ENCODE measurements at regions of chr12 and their contacts with region 1.

Region 1: DNA sequence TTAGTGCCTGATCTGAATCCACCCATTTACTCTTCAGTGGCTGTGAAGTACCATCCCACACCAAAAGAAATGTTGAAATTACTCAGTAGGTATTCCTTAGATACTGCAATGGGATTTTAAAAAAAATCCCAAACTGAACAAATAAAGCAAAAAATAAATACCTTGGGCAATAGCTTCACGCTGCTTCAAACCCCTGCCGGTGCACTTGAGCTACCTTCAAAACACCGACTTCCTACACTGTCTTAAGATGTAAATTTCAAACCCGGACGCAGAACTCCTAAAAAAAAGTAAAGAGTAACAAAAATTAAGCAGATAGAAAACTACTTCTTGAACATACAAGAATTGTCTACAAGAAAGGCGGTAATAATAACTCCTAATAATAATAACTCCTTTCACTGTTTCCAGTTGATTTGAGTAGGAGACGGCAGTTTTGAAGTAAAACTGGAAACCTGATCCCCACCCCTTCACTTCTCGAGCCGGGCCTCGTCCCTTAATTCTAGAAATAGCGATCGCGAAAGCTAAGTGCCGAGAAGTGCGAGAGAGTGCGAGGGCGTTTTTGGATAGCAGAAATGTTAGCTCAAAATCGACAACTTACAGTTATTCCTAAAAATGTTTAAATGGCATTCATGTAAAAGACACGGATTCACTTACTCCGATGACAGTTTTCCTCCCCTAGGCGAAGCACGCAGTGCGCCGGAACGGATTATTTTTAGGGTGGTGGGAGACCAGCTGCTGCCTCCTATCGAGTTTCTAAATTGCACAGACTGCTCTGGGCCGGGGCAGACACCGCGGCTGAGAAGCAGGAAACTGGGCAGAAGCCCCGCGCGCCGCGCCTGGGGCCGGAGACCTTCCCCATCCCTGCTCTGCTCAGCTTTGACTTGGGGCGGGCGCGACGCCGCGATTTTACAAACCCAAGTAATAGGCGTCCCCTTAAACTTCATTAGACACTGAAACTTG is at the start of gene ABCC9:
- DNase-seq: peak; percentile 30
- H3K4me3 ChIP-seq: peak within 1 kb of the TSS; percentile 28 to 31
- H3K27ac ChIP-seq: peak within 1 kb of the TSS; percentile 69 to 76
- H3K4me1 ChIP-seq: no peaks in the 10 kb centered on the region
- H3K27me3 ChIP-seq: no peaks in the 10 kb centered on the region
- CTCF ChIP-seq: no peak
- POLR2A ChIP-seq: no peak
- total RNA-seq, gene ABCC9: 6.1 to 10.5 TPM

Region 2: GRCh38 chr12:21774358-21775132 is 166.3 kb before region 1 on chr12 and contains the start of gene KCNJ8:
- intact Hi-C with region 1: loop called (anchors 2 kb)
- DNase-seq: peak; percentile 14
- H3K4me3 ChIP-seq: peak within 1 kb of the TSS; percentile 42 to 45
- H3K27ac ChIP-seq: peak within 1 kb of the TSS; percentile 51 to 76
- H3K4me1 ChIP-seq: no peaks in the 10 kb centered on the region
- H3K27me3 ChIP-seq: no peaks in the 10 kb centered on the region
- CTCF ChIP-seq: no peak
- POLR2A ChIP-seq: no peak
- total RNA-seq, gene KCNJ8: 9.2 to 10.3 TPM

Region 3: GRCh38 chr12:21831791-21832344 is 109.0 kb before region 1 on chr12:
- intact Hi-C with region 1: loop called (anchors 2 kb)
- DNase-seq: no peak
- H3K4me3 ChIP-seq: no peak overlapping the region
- H3K27ac ChIP-seq: peak overlapping the region; percentile 44 to 58
- H3K4me1 ChIP-seq: no peaks in the 10 kb centered on the region
- H3K27me3 ChIP-seq: no peaks in the 10 kb centered on the region
- CTCF ChIP-seq: no peak
- POLR2A ChIP-seq: no peak

Region 4: DNA sequence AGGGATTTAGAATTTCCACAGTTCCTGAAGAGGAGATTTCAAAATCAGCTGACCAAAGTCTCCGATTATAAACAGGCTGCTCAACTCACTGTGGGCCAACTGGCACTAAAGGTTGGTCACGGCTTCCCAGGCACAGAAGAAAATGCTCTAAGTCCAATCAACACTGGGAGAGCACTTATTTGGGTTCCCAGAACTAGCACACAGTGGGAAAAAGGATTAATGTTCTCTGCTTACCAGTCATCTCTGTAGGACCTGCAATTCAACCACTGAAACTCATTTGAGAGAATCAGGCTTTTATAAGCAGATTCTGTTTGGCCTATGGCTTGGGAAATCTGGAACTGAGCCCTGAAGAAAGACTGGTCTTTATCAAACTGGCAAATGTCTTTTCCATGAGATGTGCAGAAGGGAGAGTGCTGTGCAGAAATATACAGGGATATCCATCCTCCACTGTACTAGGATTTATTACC is 49.0 kb before region 1 on chr12:
- intact Hi-C with region 1: loop called (anchors 5 kb)
- DNase-seq: no peak
- H3K4me3 ChIP-seq: no peak overlapping the region
- H3K27ac ChIP-seq: peak overlapping the region; percentile 0 to 1
- H3K4me1 ChIP-seq: no peaks in the 10 kb centered on the region
- H3K27me3 ChIP-seq: no peaks in the 10 kb centered on the region
- CTCF ChIP-seq: no peak
- POLR2A ChIP-seq: no peak

Measured in prostate gland (tissue), 2 donors.